ENCODE measurements at regions of chr10 and their contacts with region 1.

Region 1: GRCh38 chr10:31896947-31897384 is 31.7 kb downstream of the ARHGAP12 start:
- DNase-seq: peak; percentile 63
- ATAC-seq: peak; percentile 96
- H3K4me3 ChIP-seq: no peak overlapping the region
- H3K27ac ChIP-seq: peak overlapping the region; percentile 83
- H3K4me1 ChIP-seq: peaks cover 19% of the 10 kb centered on the region
- H3K27me3 ChIP-seq: no peaks in the 10 kb centered on the region
- CTCF ChIP-seq: no peak

Region 2: DNA sequence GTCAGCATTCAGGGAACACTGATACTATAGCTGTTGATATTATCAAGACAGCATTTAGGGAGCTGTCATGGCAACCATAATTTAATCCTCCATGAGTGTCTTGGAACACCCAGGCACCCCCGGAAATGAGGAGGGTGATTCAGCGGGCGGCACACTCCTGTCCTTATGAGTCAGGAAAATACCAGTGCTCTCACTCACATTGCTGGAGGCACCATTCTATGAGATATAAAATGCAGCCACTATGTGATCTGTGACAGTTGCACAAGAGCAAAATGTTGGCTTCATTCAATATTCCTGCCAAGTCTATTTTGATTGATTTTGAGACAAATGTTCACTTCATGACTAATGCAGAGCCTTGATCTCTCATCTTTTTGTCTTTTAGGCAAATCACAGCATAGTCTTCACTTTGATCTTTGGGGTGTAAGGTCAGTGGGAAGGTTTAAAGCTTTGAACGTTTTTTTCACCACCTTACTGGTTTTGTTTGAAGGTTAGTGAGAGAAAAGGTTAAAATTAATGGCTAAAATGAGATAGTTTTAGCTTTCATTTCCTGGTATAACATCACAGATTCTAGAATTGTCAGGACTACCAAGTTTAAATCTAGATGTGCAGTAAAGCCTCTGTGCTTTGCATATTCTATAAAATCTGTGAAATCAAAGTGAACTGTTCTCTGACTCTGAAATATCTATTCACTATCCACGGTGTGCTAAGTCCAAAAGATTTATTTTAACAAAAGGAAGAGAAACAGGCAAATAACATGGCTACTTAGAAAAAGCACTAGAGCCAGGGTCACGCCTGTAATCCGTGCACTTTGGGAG is 44.1 kb after region 1 on chr10:
- CTCF ChIA-PET with region 1: no interaction called
- POLR2A ChIA-PET with region 1: no interaction called
- intact Hi-C with region 1: loop called (anchors 5 kb)
- DNase-seq: peak; percentile 98
- ATAC-seq: peak; percentile 79
- H3K4me3 ChIP-seq: peak overlapping the region; percentile 29; the same call in 1 of the 2 replicates
- H3K27ac ChIP-seq: peak overlapping the region; percentile 94
- H3K4me1 ChIP-seq: peaks cover 76% of the 10 kb centered on the region
- H3K27me3 ChIP-seq: no peaks in the 10 kb centered on the region
- CTCF ChIP-seq: no peak